CD4-positive, alpha-beta T cell (primary cell): ENCODE measurements at regions of chr13 and their contacts with region 1.

Region 1: DNA sequence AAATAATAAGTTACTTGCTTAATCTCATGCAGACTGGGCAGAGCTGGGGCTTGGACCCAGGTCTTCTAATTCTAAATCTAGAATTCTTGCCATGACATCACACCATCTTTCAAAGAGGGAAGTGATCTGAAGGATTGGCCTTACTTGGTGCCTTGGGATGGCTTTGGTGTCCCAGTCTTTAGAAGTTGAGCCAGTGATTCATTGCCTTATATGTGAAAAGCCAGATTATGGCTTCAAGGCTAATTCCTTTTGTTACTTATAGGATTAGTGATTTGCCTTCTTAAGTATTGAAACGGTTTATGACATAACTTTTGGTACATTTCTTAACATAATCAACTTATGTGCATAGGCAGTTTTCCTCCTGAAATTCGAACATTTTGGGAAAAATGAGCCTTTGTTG is 14.9 kb downstream of the COG3 start:
- DNase-seq: no peak
- ATAC-seq: no peak
- H3K4me3 ChIP-seq: no peak overlapping the region
- H3K4me3 Mint-ChIP-seq: no peak overlapping the region
- H3K27ac ChIP-seq: no peak overlapping the region
- H3K27ac Mint-ChIP-seq: no peak overlapping the region
- H3K4me1 ChIP-seq: peaks cover 6% of the 10 kb centered on the region
- H3K4me1 Mint-ChIP-seq: peaks cover 20% of the 10 kb centered on the region
- H3K27me3 ChIP-seq: no peaks in the 10 kb centered on the region
- H3K27me3 Mint-ChIP-seq: no peaks in the 10 kb centered on the region
- CTCF ChIP-seq: no peak

Region 2: GRCh38 chr13:45441633-45442032 is 38.0 kb before region 1 on chr13:
- CTCF ChIA-PET with region 1: no interaction called
- POLR2A ChIA-PET with region 1: no interaction called
- intact Hi-C with region 1: no loop called
- DNase-seq: peak in 4 of 14 experiments; percentile 14 to 40 (median 18)
- ATAC-seq: peak; percentile 63
- H3K4me3 ChIP-seq: no peak overlapping the region
- H3K4me3 Mint-ChIP-seq: no peak overlapping the region
- H3K27ac ChIP-seq: no peak overlapping the region
- H3K27ac Mint-ChIP-seq: no peak overlapping the region
- H3K4me1 ChIP-seq: peaks cover 5% of the 10 kb centered on the region
- H3K4me1 Mint-ChIP-seq: peaks cover 9% of the 10 kb centered on the region
- H3K27me3 ChIP-seq: no peaks in the 10 kb centered on the region
- H3K27me3 Mint-ChIP-seq: no peaks in the 10 kb centered on the region
- CTCF ChIP-seq: no peak

Region 3: GRCh38 chr13:45490068-45490467 is 10.4 kb after region 1 on chr13:
- CTCF ChIA-PET with region 1: interaction called, 3 read pairs
- POLR2A ChIA-PET with region 1: no interaction called
- intact Hi-C with region 1: loop called in 1 of 2 experiments (anchors 1 kb)
- DNase-seq: peak in 6 of 14 experiments; percentile 2 to 58 (median 39)
- ATAC-seq: peak; percentile 89
- H3K4me3 ChIP-seq: no peak overlapping the region
- H3K4me3 Mint-ChIP-seq: no peak overlapping the region
- H3K27ac ChIP-seq: no peak overlapping the region
- H3K27ac Mint-ChIP-seq: no peak overlapping the region
- H3K4me1 ChIP-seq: no peaks in the 10 kb centered on the region
- H3K4me1 Mint-ChIP-seq: no peaks in the 10 kb centered on the region
- H3K27me3 ChIP-seq: no peaks in the 10 kb centered on the region
- H3K27me3 Mint-ChIP-seq: no peaks in the 10 kb centered on the region
- CTCF ChIP-seq: peak; percentile 66

Region 4: DNA sequence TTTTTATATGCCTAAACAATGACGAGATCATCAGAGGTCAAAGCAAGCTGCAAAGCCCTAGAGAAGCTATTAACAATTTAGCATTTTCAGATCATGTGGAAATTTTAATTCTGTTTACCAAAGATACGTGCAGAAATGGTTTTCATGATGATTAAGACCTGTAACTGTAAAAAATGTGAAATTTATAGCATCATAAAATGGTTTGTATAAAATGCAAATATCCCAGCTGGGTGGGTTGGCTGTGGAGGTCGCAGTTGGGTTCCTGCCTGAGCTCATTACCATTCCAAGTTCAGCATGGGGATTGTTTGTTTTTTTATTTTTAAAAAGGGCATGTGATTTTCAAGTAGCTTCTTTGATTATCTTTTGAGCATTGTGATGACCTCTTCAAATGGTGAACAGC is 419.7 kb after region 1 on chr13:
- CTCF ChIA-PET with region 1: no interaction called
- POLR2A ChIA-PET with region 1: no interaction called
- intact Hi-C with region 1: no loop called
- DNase-seq: no peak
- ATAC-seq: no peak
- H3K4me3 ChIP-seq: no peak overlapping the region
- H3K4me3 Mint-ChIP-seq: no peak overlapping the region
- H3K27ac ChIP-seq: no peak overlapping the region
- H3K27ac Mint-ChIP-seq: no peak overlapping the region
- H3K4me1 ChIP-seq: no peaks in the 10 kb centered on the region
- H3K4me1 Mint-ChIP-seq: no peaks in the 10 kb centered on the region
- H3K27me3 ChIP-seq: peaks cover 0 to 6% of the 10 kb centered on the region in 2 experiments
- H3K27me3 Mint-ChIP-seq: peaks cover 5% of the 10 kb centered on the region
- CTCF ChIP-seq: no peak

Region 5: GRCh38 chr13:46369506-46370277 is 890.0 kb after region 1 on chr13:
- CTCF ChIA-PET with region 1: no interaction called
- POLR2A ChIA-PET with region 1: no interaction called
- intact Hi-C with region 1: no loop called
- DNase-seq: no peak
- ATAC-seq: no peak
- H3K4me3 ChIP-seq: no peak overlapping the region
- H3K4me3 Mint-ChIP-seq: no peak overlapping the region
- H3K27ac ChIP-seq: no peak overlapping the region
- H3K27ac Mint-ChIP-seq: no peak overlapping the region
- H3K4me1 ChIP-seq: no peaks in the 10 kb centered on the region
- H3K4me1 Mint-ChIP-seq: no peaks in the 10 kb centered on the region
- H3K27me3 ChIP-seq: no peaks in the 10 kb centered on the region
- H3K27me3 Mint-ChIP-seq: no peaks in the 10 kb centered on the region
- CTCF ChIP-seq: no peak